Endothelial cell of umbilical vein (primary cell): ENCODE measurements at regions of chr4 and their contacts with region 1.

Region 1: DNA sequence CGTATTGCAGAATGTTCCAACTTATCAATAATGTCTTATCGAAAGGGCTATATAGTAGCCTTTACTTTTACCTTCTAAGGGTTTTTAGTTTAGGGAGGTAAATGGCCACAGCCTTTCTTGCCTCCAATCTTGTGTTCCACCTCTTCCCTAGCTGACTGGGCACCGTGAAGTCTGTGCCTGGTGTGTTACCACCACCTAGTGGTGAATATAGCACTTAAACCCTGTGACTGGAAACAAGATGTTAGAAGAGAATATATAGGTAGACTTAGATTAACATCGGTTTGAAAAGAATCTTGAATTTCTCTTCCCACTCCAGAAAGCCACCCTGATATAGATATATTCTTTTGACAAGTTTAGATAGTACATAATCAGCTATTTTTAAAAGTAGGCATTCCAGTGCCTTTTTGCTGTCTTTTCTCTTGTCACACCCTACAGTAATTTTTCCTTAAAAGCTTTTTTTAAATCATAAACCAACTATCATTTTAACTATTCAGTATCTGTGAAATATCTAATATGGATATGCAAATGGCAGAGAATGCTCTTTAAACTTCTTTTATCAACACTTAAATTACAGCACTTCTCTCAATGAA is 27.8 kb upstream of the ADH7 start:
- DNase-seq: peak; percentile 61
- H3K4me3 ChIP-seq: no peak overlapping the region
- H3K27ac ChIP-seq: no peak overlapping the region
- H3K4me1 ChIP-seq: no peaks in the 10 kb centered on the region
- H3K27me3 ChIP-seq: peaks cover 0 to 13% of the 10 kb centered on the region in 2 experiments
- CTCF ChIP-seq: peak; percentile 56 to 65
- POLR2A ChIP-seq: no peak

Region 2: GRCh38 chr4:98150092-98150761 is 1312.7 kb before region 1 on chr4:
- CTCF ChIA-PET with region 1: interaction called, 3 read pairs
- POLR2A ChIA-PET with region 1: no interaction called
- dilution Hi-C with region 1: no loop called
- intact Hi-C with region 1: loop called (anchors 5 kb)
- DNase-seq: no peak
- H3K4me3 ChIP-seq: no peak overlapping the region
- H3K27ac ChIP-seq: no peak overlapping the region
- H3K4me1 ChIP-seq: peaks cover 6% of the 10 kb centered on the region
- H3K27me3 ChIP-seq: peaks cover 0 to 3% of the 10 kb centered on the region in 2 experiments
- CTCF ChIP-seq: no peak
- POLR2A ChIP-seq: no peak

Region 3: DNA sequence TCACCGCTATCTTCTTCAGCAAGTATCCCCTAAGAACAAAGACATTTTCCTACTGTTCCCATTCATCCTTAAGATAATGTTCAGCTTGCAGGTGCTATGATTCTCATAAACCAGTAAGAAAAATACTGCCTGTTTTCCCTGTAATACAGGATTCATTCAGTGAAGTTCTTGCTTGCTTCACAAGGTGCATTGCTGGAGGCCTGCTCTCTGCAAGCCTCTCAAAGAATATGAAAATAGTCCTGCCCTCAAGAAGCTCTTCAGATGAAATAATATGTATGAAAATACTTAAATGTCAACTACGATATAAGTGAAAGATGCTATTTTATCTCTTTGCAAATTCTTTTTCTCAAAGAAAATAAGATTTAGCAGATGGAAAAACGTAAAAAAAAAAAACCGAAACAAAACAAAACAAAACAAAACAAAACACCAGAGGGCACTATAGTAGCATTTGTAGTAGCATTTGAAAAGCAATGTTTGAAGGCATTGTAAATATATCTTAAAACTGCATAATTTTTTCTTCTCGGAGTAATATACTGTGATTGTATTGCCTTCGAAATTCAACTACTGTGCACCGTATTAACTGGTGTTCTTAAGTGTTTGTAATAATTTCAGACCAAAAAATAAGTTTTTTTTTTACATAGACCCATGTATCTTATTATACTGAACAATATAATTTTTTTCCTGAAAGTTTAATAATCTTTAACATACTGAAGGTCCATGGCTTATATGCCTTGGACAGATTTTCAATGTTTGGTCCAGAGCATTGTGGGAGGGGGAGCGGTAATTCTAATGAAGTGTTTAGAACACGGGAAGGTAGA is 344.9 kb before region 1 on chr4:
- CTCF ChIA-PET with region 1: interaction called, 3 read pairs
- POLR2A ChIA-PET with region 1: no interaction called
- dilution Hi-C with region 1: no loop called
- intact Hi-C with region 1: loop called (anchors 1 kb)
- DNase-seq: peak; percentile 18
- H3K4me3 ChIP-seq: no peak overlapping the region
- H3K27ac ChIP-seq: no peak overlapping the region
- H3K4me1 ChIP-seq: no peaks in the 10 kb centered on the region
- H3K27me3 ChIP-seq: peaks cover 0 to 2% of the 10 kb centered on the region in 2 experiments
- CTCF ChIP-seq: no peak
- POLR2A ChIP-seq: no peak

Region 4: GRCh38 chr4:99252746-99253145 is 210.2 kb before region 1 on chr4:
- CTCF ChIA-PET with region 1: no interaction called
- POLR2A ChIA-PET with region 1: no interaction called
- dilution Hi-C with region 1: no loop called
- intact Hi-C with region 1: no loop called
- DNase-seq: no peak
- H3K4me3 ChIP-seq: no peak overlapping the region
- H3K27ac ChIP-seq: no peak overlapping the region
- H3K4me1 ChIP-seq: no peaks in the 10 kb centered on the region
- H3K27me3 ChIP-seq: no peaks in the 10 kb centered on the region
- CTCF ChIP-seq: no peak
- POLR2A ChIP-seq: no peak

Region 5: GRCh38 chr4:99383833-99384392 is 79.1 kb before region 1 on chr4:
- CTCF ChIA-PET with region 1: no interaction called
- POLR2A ChIA-PET with region 1: no interaction called
- dilution Hi-C with region 1: no loop called
- intact Hi-C with region 1: no loop called
- DNase-seq: no peak
- H3K4me3 ChIP-seq: no peak overlapping the region
- H3K27ac ChIP-seq: no peak overlapping the region
- H3K4me1 ChIP-seq: no peaks in the 10 kb centered on the region
- H3K27me3 ChIP-seq: no peaks in the 10 kb centered on the region
- CTCF ChIP-seq: no peak
- POLR2A ChIP-seq: no peak

Region 6: GRCh38 chr4:99808260-99808857 is 345.4 kb after region 1 on chr4:
- CTCF ChIA-PET with region 1: interaction called, 6 read pairs
- POLR2A ChIA-PET with region 1: no interaction called
- dilution Hi-C with region 1: no loop called
- intact Hi-C with region 1: loop called (anchors 10 kb)
- DNase-seq: peak; percentile 47
- H3K4me3 ChIP-seq: no peak overlapping the region
- H3K27ac ChIP-seq: no peak overlapping the region
- H3K4me1 ChIP-seq: no peaks in the 10 kb centered on the region
- H3K27me3 ChIP-seq: no peaks in the 10 kb centered on the region
- CTCF ChIP-seq: peak; percentile 40 to 46
- POLR2A ChIP-seq: no peak